ENCODE measurements at regions of chr12 and their contacts with region 1.

Region 1: DNA sequence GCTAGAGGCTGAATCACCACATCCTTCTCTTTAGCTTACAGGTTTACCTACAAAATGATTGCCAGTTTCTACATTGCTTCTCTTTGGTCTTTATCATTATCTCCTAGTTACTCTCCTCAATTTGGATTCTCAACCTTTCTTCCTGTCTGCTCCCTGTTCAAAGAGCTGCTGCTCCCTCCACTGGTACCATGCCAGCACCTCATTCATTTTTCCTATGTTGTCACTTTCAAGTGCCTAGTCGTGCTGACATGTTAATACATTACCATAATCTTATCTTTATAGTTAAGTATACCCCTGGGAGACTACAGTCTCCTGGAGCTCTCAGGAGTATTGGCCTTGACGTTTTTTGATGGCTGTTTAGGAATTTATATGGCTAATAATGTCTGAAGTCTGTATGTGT is 14.2 kb downstream of the FRS2 start:
- DNase-seq: no peak
- ATAC-seq: no peak
- H3K4me3 ChIP-seq: no peak overlapping the region
- H3K27ac ChIP-seq: no peak overlapping the region
- H3K4me1 ChIP-seq: peaks cover 15% of the 10 kb centered on the region
- H3K27me3 ChIP-seq: no peaks in the 10 kb centered on the region
- CTCF ChIP-seq: no peak

Region 2: DNA sequence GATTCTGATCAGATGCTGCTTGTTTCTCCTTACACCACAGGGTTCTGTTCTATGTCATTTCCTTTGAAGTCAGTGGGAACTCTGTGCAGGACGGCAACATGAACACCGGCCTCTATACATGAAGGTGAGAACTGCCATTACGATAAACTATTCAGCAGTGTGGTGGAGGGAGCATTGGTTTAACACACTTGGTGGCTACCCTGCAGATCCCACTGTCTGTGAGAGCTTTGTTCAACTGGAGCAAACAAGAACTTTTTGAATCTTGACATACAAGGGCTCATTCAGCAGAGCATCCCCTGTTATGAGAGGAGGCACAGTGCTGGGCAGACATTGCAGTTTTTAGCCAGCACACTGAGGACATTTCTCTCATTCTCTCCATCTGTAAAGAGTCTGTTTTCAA is 25.0 kb before region 1 on chr12:
- intact Hi-C with region 1: loop called in 1 of 2 experiments (anchors 2 kb)
- DNase-seq: no peak
- ATAC-seq: no peak
- H3K4me3 ChIP-seq: no peak overlapping the region
- H3K27ac ChIP-seq: no peak overlapping the region
- H3K4me1 ChIP-seq: no peaks in the 10 kb centered on the region
- H3K27me3 ChIP-seq: no peaks in the 10 kb centered on the region
- CTCF ChIP-seq: no peak

Measured in psoas muscle (tissue), 8 donors.